ENCODE measurements at regions of chr1 and their contacts with region 1.

Region 1: DNA sequence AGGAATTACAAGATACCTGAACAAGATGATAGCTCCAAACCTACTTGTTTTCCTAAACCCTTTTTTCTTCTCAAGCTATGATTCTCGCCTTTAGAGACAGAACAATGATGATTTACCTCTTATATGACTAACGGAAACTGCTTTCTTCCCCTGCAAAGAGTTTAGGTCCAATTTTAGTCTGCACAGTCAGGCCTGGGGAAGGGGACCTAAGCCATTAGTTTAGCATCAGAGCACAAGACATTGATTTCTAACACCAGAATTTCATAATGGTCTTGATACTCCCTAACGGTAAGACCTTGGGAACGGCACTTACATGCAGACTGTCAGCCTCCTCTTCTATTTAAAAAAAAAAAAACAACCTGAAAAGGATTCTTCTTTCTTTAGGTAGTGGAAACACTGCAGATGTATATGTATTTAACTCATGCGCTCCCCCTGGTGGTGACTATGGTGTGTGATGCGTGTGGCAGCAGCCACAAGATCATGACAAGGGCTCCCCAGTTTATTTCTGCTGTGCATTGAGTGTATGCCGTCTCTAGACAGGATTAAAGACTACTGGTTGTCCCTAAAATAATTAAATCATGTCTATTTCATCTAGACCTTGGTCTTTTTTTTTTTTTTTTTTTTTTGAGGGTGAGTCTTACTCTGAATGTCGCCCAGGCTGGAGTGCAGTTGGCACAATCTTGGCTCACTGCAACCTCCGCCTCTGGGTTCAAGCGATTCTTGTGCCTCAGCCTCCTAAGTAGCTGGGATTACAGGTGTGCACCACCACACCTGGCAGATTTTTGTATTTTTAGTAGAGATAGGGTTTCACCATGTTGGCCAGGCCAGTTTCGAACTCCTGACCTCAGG is 37.3 kb upstream of the TMEM222 start:
- DNase-seq: peak; percentile 88
- ATAC-seq: peak; percentile 93
- H3K4me3 ChIP-seq: no peak overlapping the region
- H3K4me3 Mint-ChIP-seq: no peak overlapping the region
- H3K27ac ChIP-seq: peak overlapping the region in 1 of 2 donors; percentile 47
- H3K27ac Mint-ChIP-seq: no peak overlapping the region
- H3K4me1 ChIP-seq: peaks cover 0 to 9% of the 10 kb centered on the region in 2 donors
- H3K4me1 Mint-ChIP-seq: peaks cover 12% of the 10 kb centered on the region
- H3K27me3 ChIP-seq: no peaks in the 10 kb centered on the region
- H3K27me3 Mint-ChIP-seq: no peaks in the 10 kb centered on the region
- CTCF ChIP-seq: peak; percentile 87

Region 2: DNA sequence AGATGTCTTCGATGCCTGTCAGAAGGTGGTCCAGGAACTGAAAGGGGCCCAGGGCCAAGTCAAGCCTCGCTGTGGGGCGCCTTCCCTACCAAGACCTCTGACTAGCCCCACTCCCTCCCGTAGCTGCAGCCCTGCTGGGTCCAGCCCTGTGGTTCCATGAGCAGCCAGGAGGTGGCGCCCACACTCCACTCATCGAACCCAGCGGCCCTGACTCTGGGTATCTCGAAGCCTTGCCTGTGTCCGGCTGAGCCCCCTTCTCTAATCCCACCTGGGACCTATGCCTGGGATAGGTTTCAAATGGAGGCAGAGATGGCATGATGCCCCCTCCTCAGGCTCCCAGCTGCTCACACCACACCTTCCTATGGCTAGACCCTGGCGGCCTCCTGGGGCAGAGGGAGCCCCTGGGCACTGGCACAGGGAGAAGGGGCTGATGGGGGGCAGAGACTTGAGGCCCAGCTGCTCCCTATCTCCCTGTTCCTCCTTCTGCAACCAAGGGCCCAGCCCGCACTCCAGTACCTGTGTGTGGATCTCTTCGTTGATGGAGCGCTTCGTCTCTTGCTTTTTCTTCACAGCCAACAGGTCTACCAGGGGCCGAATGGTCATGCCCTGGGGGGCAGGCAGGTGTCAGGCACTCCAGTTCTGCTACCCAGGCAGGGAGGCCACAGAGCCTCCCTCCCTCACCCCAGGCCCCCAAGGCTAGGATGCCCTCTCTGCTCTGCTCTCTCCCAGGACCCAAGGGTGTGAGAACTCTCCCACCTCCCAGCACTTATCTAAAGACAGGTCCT is 181.8 kb before region 1 on chr1:
- CTCF ChIA-PET with region 1: interaction called, 343 read pairs
- POLR2A ChIA-PET with region 1: interaction called, 13 read pairs
- intact Hi-C with region 1: loop called (anchors 1 kb)
- DNase-seq: peak; percentile 85
- ATAC-seq: peak; percentile 46
- H3K4me3 ChIP-seq: no peak overlapping the region
- H3K4me3 Mint-ChIP-seq: no peak overlapping the region
- H3K27ac ChIP-seq: no peak overlapping the region
- H3K27ac Mint-ChIP-seq: peak overlapping the region; percentile 77
- H3K4me1 ChIP-seq: peaks cover 24 to 41% of the 10 kb centered on the region in 2 donors
- H3K4me1 Mint-ChIP-seq: peaks cover 37% of the 10 kb centered on the region
- H3K27me3 ChIP-seq: no peaks in the 10 kb centered on the region
- H3K27me3 Mint-ChIP-seq: no peaks in the 10 kb centered on the region
- CTCF ChIP-seq: peak; percentile 92

Region 3: DNA sequence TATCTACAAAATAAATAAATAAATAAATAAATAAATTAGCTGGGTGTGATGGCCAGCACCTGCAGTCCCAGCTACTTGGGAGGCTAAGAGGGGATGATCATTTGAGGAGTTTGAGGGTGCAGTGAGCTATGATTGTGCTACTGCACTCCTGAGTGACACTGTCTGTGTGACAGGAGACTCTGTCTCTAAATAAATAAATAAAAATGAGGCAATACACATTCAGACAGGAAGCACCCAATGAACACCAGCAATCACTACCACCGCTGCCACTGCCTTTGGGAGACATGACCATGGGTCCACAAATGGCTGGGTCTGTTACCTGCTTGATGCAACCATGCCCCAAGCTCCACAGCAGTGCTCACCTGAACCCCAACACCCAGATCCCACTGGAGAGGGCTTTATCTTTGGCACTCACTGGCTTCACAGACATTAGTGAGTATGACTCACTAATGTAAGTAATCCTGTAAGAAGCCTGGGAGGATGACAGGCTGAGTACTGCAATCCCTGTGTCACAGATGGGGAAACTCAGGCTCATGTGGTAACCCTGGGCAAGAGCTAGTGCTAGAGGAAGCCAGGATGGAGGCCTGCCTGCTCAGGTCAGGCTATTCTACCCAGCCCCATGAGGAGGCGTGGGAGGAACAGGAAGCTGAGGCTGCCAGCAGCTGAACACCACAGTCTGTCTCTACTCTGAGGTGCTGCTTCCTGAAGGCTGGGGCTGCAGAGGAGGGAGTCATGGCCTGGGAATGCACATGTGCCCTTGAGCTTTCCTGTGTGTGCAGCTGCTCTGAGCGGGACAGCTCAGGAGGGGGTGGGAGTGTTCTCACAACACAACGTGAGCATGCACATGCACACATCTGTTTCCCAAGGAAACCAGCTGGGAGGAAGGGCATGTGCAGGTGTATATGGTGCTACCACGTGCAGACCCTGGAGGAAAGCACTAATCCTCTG is 172.7 kb before region 1 on chr1:
- CTCF ChIA-PET with region 1: interaction called, 343 read pairs
- POLR2A ChIA-PET with region 1: no interaction called
- intact Hi-C with region 1: no loop called
- DNase-seq: peak; percentile 74
- ATAC-seq: peak; percentile 98
- H3K4me3 ChIP-seq: no peak overlapping the region
- H3K4me3 Mint-ChIP-seq: no peak overlapping the region
- H3K27ac ChIP-seq: peak overlapping the region; percentile 4 to 65
- H3K27ac Mint-ChIP-seq: peak overlapping the region; percentile 85
- H3K4me1 ChIP-seq: peaks cover 13 to 26% of the 10 kb centered on the region in 2 donors
- H3K4me1 Mint-ChIP-seq: peaks cover 27% of the 10 kb centered on the region
- H3K27me3 ChIP-seq: no peaks in the 10 kb centered on the region
- H3K27me3 Mint-ChIP-seq: no peaks in the 10 kb centered on the region
- CTCF ChIP-seq: peak; percentile 26

Region 4: DNA sequence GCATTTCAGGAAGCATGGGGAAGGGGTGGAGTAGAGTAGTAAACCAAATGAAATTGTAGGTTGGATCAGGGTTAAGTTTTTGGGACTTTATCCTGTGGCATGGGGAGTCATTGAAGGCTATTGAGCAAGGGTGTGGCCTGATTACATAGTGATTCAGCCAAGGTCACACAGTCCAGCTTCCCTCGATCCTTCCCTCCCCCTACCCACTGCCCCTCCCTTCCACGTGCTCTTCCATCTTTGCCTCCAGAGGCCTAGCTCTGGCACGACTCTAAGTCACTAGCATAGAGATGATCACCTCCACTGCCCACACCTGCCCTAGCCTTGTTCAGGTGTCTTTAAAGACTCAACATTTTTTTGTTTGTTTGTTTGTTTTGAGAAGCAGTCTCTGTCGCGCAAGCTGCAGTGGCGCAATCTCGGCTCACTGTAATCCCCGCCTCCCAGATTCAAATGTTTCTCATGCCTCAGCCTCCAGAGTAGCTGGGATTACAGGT is 92.6 kb before region 1 on chr1:
- CTCF ChIA-PET with region 1: interaction called, 114 read pairs
- POLR2A ChIA-PET with region 1: no interaction called
- intact Hi-C with region 1: no loop called
- DNase-seq: no peak
- ATAC-seq: no peak
- H3K4me3 ChIP-seq: no peak overlapping the region
- H3K4me3 Mint-ChIP-seq: no peak overlapping the region
- H3K27ac ChIP-seq: no peak overlapping the region
- H3K27ac Mint-ChIP-seq: no peak overlapping the region
- H3K4me1 ChIP-seq: no peaks in the 10 kb centered on the region
- H3K4me1 Mint-ChIP-seq: no peaks in the 10 kb centered on the region
- H3K27me3 ChIP-seq: no peaks in the 10 kb centered on the region
- H3K27me3 Mint-ChIP-seq: no peaks in the 10 kb centered on the region
- CTCF ChIP-seq: no peak

Region 5: GRCh38 chr1:27257155-27257554 is 27.5 kb before region 1 on chr1:
- CTCF ChIA-PET with region 1: interaction called, 10 read pairs
- POLR2A ChIA-PET with region 1: no interaction called
- intact Hi-C with region 1: no loop called
- DNase-seq: no peak
- ATAC-seq: no peak
- H3K4me3 ChIP-seq: no peak overlapping the region
- H3K4me3 Mint-ChIP-seq: no peak overlapping the region
- H3K27ac ChIP-seq: no peak overlapping the region
- H3K27ac Mint-ChIP-seq: peak overlapping the region; percentile 16
- H3K4me1 ChIP-seq: peaks cover 39 to 41% of the 10 kb centered on the region in 2 donors
- H3K4me1 Mint-ChIP-seq: peaks cover 46% of the 10 kb centered on the region
- H3K27me3 ChIP-seq: no peaks in the 10 kb centered on the region
- H3K27me3 Mint-ChIP-seq: no peaks in the 10 kb centered on the region
- CTCF ChIP-seq: no peak

Region 6: DNA sequence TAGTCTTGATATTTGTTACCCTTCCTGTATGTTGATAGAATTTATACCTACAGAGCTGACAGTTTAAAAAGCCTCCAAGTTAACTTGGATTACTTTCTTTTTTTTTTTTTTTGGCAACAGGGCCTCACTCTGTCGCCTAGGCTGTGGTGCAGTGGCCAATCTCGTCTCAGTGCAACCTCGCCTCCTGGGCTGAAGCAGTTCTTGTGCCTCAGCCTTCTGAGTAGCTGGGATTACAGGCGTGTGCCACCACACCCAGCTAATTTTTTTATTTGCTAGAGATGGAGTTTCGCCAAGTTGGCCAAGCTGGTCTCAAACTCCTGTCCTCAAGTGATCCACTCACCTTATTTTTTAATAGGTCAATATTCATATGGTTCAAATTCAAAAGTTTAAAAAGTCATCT is 17.5 kb before region 1 on chr1:
- CTCF ChIA-PET with region 1: interaction called, 10 read pairs
- POLR2A ChIA-PET with region 1: no interaction called
- intact Hi-C with region 1: no loop called
- DNase-seq: no peak
- ATAC-seq: no peak
- H3K4me3 ChIP-seq: no peak overlapping the region
- H3K4me3 Mint-ChIP-seq: no peak overlapping the region
- H3K27ac ChIP-seq: no peak overlapping the region
- H3K27ac Mint-ChIP-seq: no peak overlapping the region
- H3K4me1 ChIP-seq: no peaks in the 10 kb centered on the region
- H3K4me1 Mint-ChIP-seq: no peaks in the 10 kb centered on the region
- H3K27me3 ChIP-seq: no peaks in the 10 kb centered on the region
- H3K27me3 Mint-ChIP-seq: no peaks in the 10 kb centered on the region
- CTCF ChIP-seq: no peak

Region 7: GRCh38 chr1:27365372-27366112 is 80.9 kb after region 1 on chr1:
- CTCF ChIA-PET with region 1: no interaction called
- POLR2A ChIA-PET with region 1: no interaction called
- intact Hi-C with region 1: no loop called
- DNase-seq: peak; percentile 88
- ATAC-seq: peak; percentile 70
- H3K4me3 ChIP-seq: peak overlapping the region; percentile 32 to 74 (median 60)
- H3K4me3 Mint-ChIP-seq: peak overlapping the region; percentile 93
- H3K27ac ChIP-seq: no peak overlapping the region
- H3K27ac Mint-ChIP-seq: peak overlapping the region; percentile 82
- H3K4me1 ChIP-seq: peaks cover 33 to 47% of the 10 kb centered on the region in 2 donors
- H3K4me1 Mint-ChIP-seq: peaks cover 54% of the 10 kb centered on the region
- H3K27me3 ChIP-seq: no peaks in the 10 kb centered on the region
- H3K27me3 Mint-ChIP-seq: no peaks in the 10 kb centered on the region
- CTCF ChIP-seq: no peak